OCI-LY7 (cell line): ENCODE measurements at regions of chr5 and their contacts with region 1.

Region 1: GRCh38 chr5:35089334-35090314 is 41.9 kb upstream of the AGXT2 start:
- DNase-seq: peak; percentile 56
- H3K4me3 ChIP-seq: no peak overlapping the region
- H3K27ac ChIP-seq: no peak overlapping the region
- H3K4me1 ChIP-seq: no peaks in the 10 kb centered on the region
- CTCF ChIP-seq: peak; percentile 86

Region 2: DNA sequence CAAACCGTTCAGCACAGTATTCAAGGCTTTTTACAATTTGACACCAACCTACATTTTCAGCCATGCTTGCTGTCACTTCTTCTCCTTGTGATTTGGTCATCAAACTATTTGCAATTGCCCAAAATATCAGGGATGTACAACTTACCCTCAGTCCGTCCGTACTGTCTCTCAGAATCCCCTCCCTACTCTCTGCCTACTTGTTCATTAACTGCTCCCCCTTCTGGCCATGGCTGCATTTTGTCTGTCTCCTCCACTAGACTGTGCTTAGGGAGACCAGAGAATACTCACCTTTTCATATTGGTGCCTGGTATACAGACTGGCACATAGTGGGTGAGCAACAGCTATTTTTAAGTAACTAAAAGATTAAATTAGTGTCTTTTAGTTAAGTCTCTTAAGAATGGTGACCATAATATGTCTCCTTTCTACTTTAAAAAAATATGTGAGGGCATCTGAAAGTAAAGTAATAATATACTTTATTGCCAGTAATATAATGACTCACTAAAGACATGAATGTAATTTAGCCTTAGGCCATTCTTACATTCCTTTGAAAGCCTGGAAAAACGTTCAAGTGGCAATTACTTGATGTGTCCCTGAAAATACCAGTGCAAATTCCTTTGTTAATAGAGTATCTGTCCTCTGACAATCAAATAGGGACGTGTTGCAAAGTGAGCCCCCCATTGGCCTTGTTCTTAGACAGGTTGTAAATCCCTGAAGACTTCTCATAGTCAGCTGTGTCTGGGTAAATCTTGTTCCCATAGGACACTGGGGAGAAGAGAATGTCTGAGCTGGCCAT is 112.9 kb after region 1 on chr5:
- CTCF ChIA-PET with region 1: no interaction called
- POLR2A ChIA-PET with region 1: no interaction called
- intact Hi-C with region 1: loop called (anchors 2 kb)
- DNase-seq: peak; percentile 37
- H3K4me3 ChIP-seq: no peak overlapping the region
- H3K27ac ChIP-seq: no peak overlapping the region
- H3K4me1 ChIP-seq: no peaks in the 10 kb centered on the region
- CTCF ChIP-seq: peak; percentile 80

Region 3: DNA sequence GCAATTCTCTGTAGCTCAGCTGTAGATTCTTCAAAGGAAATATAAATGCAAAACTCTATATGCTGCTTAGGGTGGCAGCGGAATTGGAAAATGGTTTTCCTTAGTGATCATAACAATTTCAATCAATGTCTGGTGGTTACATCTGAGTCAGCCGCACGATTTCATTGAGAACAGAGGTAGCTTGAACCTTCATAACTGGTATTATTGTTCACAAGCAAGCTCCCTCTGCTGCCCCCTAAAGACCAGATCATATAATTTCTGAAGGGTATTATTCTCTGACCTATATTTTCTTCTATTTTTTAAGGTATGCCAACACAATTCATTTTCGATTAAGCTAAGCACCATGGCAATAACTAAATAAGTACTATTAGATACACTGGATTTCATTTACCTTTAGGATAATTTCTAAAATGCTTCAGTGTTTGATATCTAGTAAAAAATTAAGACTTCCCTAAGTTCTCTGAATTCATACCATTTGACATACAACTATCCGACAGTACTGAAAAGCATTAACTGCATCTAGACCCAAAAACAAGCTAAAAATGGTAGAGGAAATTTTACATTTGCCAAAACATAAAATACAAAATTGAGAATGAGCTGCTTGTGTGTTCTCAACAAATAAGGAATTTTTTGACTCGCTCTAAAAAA is 346.9 kb after region 1 on chr5:
- CTCF ChIA-PET with region 1: no interaction called
- POLR2A ChIA-PET with region 1: no interaction called
- intact Hi-C with region 1: loop called (anchors 10 kb)
- DNase-seq: peak; percentile 37
- H3K4me3 ChIP-seq: no peak overlapping the region
- H3K27ac ChIP-seq: no peak overlapping the region
- H3K4me1 ChIP-seq: no peaks in the 10 kb centered on the region
- CTCF ChIP-seq: peak; percentile 84